ENCODE measurements at regions of chr20 and their contacts with region 1.

Region 1: GRCh38 chr20:43840382-43841070 is 74.1 kb upstream of the TOX2 start:
- DNase-seq: peak in 1 of 7 donors; percentile 45
- H3K4me3 ChIP-seq: no peak overlapping the region
- H3K27ac ChIP-seq: no peak overlapping the region
- H3K4me1 ChIP-seq: peaks cover 0 to 11% of the 10 kb centered on the region in 2 donors
- H3K27me3 ChIP-seq: no peaks in the 10 kb centered on the region
- CTCF ChIP-seq: peak in 3 of 6 experiments; percentile 8 to 32 (median 16)
- POLR2A ChIP-seq: no peak

Region 2: GRCh38 chr20:44089987-44090674 is 249.6 kb after region 1 on chr20:
- intact Hi-C with region 1: loop called in 1 of 2 experiments (anchors 5 kb)
- DNase-seq: peak in 5 of 7 donors; percentile 25 to 73 (median 47)
- H3K4me3 ChIP-seq: no peak overlapping the region
- H3K27ac ChIP-seq: no peak overlapping the region
- H3K4me1 ChIP-seq: no peaks in the 10 kb centered on the region
- H3K27me3 ChIP-seq: peaks cover 3% of the 10 kb centered on the region
- CTCF ChIP-seq: no peak
- POLR2A ChIP-seq: no peak